H1 (cell line): ENCODE measurements at regions of chr6 and their contacts with region 1.

Region 1: DNA sequence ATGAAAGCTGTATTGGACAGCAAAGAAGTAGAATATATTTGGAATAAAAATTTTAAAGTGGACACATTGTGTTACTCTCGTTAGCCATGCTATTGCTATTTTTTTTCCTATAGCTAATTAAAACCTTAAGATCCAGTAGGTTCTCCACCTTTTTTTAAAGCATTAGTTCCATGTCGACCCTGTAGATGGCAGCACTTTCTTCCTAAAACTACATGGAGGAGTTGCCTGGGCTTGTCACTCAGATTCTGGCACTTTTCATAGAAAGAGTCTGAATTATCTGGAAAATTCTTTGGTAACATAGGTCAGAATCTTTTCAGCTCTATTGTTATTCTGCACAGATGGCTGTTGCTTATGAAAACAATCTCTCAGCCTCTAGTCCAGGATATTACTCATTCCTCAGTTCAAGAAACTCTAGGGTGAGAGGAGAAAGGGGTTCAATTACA is 42.0 kb upstream of the ESR1 start:
- DNase-seq: no peak
- H3K4me3 ChIP-seq: no peak overlapping the region
- H3K27ac ChIP-seq: no peak overlapping the region
- H3K4me1 ChIP-seq: peaks cover 0 to 9% (median 2%) of the 10 kb centered on the region in 4 experiments; a peak in 3 of 7 replicates
- H3K27me3 ChIP-seq: peaks cover 0 to 1% (median 0%) of the 10 kb centered on the region in 4 experiments; a peak in 1 of 7 replicates
- CTCF ChIP-seq: peak in 2 of 3 experiments; percentile 58 to 62; a peak in 3 of 4 replicates
- EP300 ChIP-seq: no peak
- POLR2A ChIP-seq: no peak
- RAD21 ChIP-seq: peak; percentile 79

Region 2: GRCh38 chr6:151617522-151617921 is 147.9 kb before region 1 on chr6:
- CTCF ChIA-PET with region 1: no interaction called
- POLR2A ChIA-PET with region 1: no interaction called
- DNase-seq: no peak
- H3K4me3 ChIP-seq: no peak overlapping the region
- H3K27ac ChIP-seq: no peak overlapping the region
- H3K4me1 ChIP-seq: peaks cover 2 to 10% (median 6%) of the 10 kb centered on the region in 4 experiments; a peak in 6 of 7 replicates
- H3K27me3 ChIP-seq: no peaks in the 10 kb centered on the region
- CTCF ChIP-seq: no peak
- EP300 ChIP-seq: no peak
- POLR2A ChIP-seq: no peak
- RAD21 ChIP-seq: no peak

Region 3: GRCh38 chr6:151704383-151704782 is 61.1 kb before region 1 on chr6:
- CTCF ChIA-PET with region 1: interaction called, 13 read pairs
- POLR2A ChIA-PET with region 1: no interaction called
- DNase-seq: no peak
- H3K4me3 ChIP-seq: no peak overlapping the region
- H3K27ac ChIP-seq: no peak overlapping the region
- H3K4me1 ChIP-seq: no peaks in the 10 kb centered on the region
- H3K27me3 ChIP-seq: no peaks in the 10 kb centered on the region
- CTCF ChIP-seq: no peak
- EP300 ChIP-seq: no peak
- POLR2A ChIP-seq: no peak
- RAD21 ChIP-seq: no peak

Region 4: GRCh38 chr6:151807533-151808370 is 42.3 kb after region 1 on chr6 and contains the start of gene ESR1:
- CTCF ChIA-PET with region 1: interaction called, 21 read pairs
- POLR2A ChIA-PET with region 1: no interaction called
- DNase-seq: peak; percentile 29 to 70
- H3K4me3 ChIP-seq: peak within 1 kb of the TSS; percentile 34 to 70 (median 50)
- H3K27ac ChIP-seq: no peak within 1 kb of the TSS
- H3K4me1 ChIP-seq: peaks cover 0 to 12% (median 5%) of the 10 kb centered on the region in 4 experiments; a peak in 4 of 7 replicates
- H3K27me3 ChIP-seq: peaks cover 20 to 39% (median 32%) of the 10 kb centered on the region in 4 experiments
- CTCF ChIP-seq: no peak
- EP300 ChIP-seq: no peak
- POLR2A ChIP-seq: no peak
- RAD21 ChIP-seq: no peak
- total RNA-seq, gene ESR1: 0.10 and 0.17 TPM in 2 replicates

Region 5: DNA sequence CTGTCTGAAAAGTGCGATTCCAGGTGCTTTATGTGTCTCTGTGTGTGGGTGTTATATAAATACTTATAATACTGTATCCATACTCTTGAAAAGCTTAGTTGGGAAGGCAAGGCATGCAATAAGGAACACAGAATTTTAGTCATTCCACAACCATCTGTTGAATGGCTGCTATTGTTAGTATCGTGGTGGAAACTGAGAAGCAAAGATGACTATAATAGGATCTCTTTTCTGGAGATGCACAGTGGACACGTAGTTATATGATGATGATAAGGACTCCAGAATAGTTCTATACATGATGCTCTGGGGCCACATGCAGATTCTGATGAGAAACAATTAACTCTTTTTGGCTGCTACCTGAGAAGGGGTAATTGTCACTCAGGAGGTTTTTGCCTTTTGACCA is 67.2 kb after region 1 on chr6:
- CTCF ChIA-PET with region 1: no interaction called
- POLR2A ChIA-PET with region 1: no interaction called
- DNase-seq: no peak
- H3K4me3 ChIP-seq: no peak overlapping the region
- H3K27ac ChIP-seq: no peak overlapping the region
- H3K4me1 ChIP-seq: peaks cover 0 to 4% (median 0%) of the 10 kb centered on the region in 4 experiments; a peak in 1 of 7 replicates
- H3K27me3 ChIP-seq: no peaks in the 10 kb centered on the region
- CTCF ChIP-seq: no peak
- EP300 ChIP-seq: no peak
- POLR2A ChIP-seq: no peak
- RAD21 ChIP-seq: no peak

Region 6: DNA sequence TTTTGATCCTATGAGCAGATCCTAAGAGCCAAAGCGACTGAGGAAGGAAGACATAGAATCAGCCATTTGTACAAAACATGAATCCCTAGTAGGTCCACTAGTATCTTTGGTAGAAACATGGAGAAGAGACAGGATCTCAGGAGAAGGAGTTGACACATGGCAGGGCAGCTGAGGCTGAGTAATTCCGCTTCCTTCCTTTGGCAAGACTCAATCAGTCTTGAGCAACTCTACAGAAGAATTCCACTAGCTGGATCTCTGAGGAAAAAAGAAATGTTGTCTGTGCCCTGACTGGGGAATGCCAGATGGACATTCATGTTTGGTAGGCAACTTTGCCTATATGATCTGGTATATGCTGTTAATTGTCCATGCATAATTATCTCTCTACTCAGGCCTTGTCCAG is 77.4 kb after region 1 on chr6:
- CTCF ChIA-PET with region 1: no interaction called
- POLR2A ChIA-PET with region 1: no interaction called
- DNase-seq: no peak
- H3K4me3 ChIP-seq: no peak overlapping the region
- H3K27ac ChIP-seq: no peak overlapping the region
- H3K4me1 ChIP-seq: no peaks in the 10 kb centered on the region
- H3K27me3 ChIP-seq: peaks cover 0 to 1% (median 0%) of the 10 kb centered on the region in 4 experiments; a peak in 1 of 7 replicates
- CTCF ChIP-seq: no peak
- EP300 ChIP-seq: no peak
- POLR2A ChIP-seq: no peak
- RAD21 ChIP-seq: no peak